K562 (cell line): ENCODE measurements at regions of chr1 and their contacts with region 1.

Region 1: DNA sequence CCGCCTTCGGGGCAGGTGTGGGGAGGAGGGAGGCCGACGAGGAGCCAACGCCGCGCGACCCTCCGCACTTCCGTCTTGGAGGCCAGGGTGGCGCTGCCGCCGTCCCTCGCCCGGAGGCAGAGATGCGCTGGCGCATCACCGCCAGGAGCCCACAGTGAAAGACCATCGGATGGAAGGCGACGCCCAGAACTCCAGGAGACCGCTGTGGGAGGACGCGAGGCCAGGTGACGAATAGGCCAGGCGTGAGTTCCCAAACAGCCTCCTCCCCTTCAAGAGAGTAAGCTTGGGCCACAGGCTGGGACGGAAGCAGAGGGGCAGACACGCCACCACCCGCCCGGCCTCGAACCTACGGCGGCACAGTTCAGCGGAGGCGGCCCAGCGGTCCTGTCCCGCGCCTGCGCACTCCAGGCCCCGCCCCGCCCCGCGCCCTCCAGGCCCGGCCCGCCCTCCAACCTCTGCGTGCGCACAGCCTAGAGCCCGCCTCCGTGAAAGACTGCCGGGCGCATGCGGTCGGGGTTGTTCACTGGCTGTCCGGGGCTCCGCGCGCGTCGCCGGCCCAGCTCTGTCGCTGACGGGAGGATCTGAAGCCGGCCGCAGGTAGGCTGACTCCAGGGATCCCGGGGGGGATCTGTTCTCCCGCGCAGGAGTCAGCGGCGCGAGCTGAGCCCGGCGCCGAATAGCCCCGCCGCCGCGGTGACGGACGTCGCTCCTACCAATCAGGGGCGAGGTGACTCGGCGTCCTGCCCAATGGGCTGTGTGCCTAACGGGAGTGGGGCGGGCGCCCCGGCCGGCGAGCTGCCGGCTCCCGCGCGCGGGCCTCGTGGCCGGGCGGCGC is at the start of gene CTPS1:
- DNase-seq: peak; percentile 97 to 100 (median 99)
- ATAC-seq: peak; percentile 94
- H3K4me3 ChIP-seq: peak within 1 kb of the TSS; percentile 72
- H3K27ac ChIP-seq: peak within 1 kb of the TSS; percentile 97
- H3K4me1 ChIP-seq: peaks cover 34 to 37% of the 10 kb centered on the region in 2 experiments
- H3K27me3 ChIP-seq: no peaks in the 10 kb centered on the region
- CTCF ChIP-seq: peak; percentile 38 to 62 (median 43)
- EP300 ChIP-seq: no peak
- POLR2A ChIP-seq: peak; percentile 97
- RAD21 ChIP-seq: no peak
- polyA plus RNA-seq, gene CTPS1: 71.5 to 72.2 TPM

Region 2: GRCh38 chr1:40736085-40736531 is 243.3 kb before region 1 on chr1:
- CTCF ChIA-PET with region 1: no interaction called
- POLR2A ChIA-PET with region 1: no interaction called
- in situ Hi-C with region 1: no loop called
- intact Hi-C with region 1: no loop called
- DNase-seq: no peak
- ATAC-seq: no peak
- H3K4me3 ChIP-seq: no peak overlapping the region
- H3K27ac ChIP-seq: no peak overlapping the region
- H3K4me1 ChIP-seq: peaks cover 3 to 5% of the 10 kb centered on the region in 2 experiments; a peak in 4 of 5 replicates
- H3K27me3 ChIP-seq: no peaks in the 10 kb centered on the region
- CTCF ChIP-seq: no peak
- EP300 ChIP-seq: no peak
- POLR2A ChIP-seq: no peak
- RAD21 ChIP-seq: no peak

Region 3: DNA sequence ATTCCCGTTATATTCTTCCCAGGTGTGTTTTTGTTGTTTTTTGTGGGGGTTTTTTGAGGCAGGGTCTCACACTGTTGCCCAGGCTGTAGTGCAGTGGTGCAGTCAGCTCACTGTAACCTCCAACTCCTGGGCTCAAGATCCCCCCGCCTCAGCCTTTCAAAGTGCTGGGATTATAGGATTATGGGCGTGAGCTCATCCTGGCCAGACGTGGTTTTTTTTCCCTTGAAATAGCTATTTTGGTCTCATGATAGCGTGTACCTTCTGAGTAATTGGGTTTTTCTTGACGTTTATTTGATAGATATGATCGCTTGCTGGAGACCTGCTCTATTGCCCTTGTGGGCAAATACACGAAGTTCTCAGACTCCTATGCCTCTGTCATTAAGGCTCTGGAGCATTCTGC is 17.6 kb after region 1 on chr1:
- CTCF ChIA-PET with region 1: no interaction called
- POLR2A ChIA-PET with region 1: interaction called, 24 read pairs
- in situ Hi-C with region 1: no loop called
- intact Hi-C with region 1: no loop called
- DNase-seq: no peak
- ATAC-seq: no peak
- H3K4me3 ChIP-seq: no peak overlapping the region
- H3K27ac ChIP-seq: no peak overlapping the region
- H3K4me1 ChIP-seq: no peaks in the 10 kb centered on the region
- H3K27me3 ChIP-seq: no peaks in the 10 kb centered on the region
- CTCF ChIP-seq: no peak
- EP300 ChIP-seq: no peak
- POLR2A ChIP-seq: no peak
- RAD21 ChIP-seq: no peak

Region 4: GRCh38 chr1:41241782-41242341 is 262.4 kb after region 1 on chr1 and contains the start of gene SCMH1:
- CTCF ChIA-PET with region 1: no interaction called
- POLR2A ChIA-PET with region 1: no interaction called
- in situ Hi-C with region 1: no loop called
- intact Hi-C with region 1: no loop called
- DNase-seq: peak; percentile 78 to 96 (median 92)
- ATAC-seq: peak; percentile 79
- H3K4me3 ChIP-seq: peak within 1 kb of the TSS; percentile 66
- H3K27ac ChIP-seq: peak within 1 kb of the TSS; percentile 92
- H3K4me1 ChIP-seq: peaks cover 35 to 57% of the 10 kb centered on the region in 2 experiments
- H3K27me3 ChIP-seq: no peaks in the 10 kb centered on the region
- CTCF ChIP-seq: no peak
- EP300 ChIP-seq: no peak
- POLR2A ChIP-seq: peak; percentile 66
- RAD21 ChIP-seq: no peak
- polyA plus RNA-seq, gene SCMH1: 8.5 to 14.0 TPM